K562 (cell line): ENCODE measurements at regions of chr6 and their contacts with region 1.

Region 1: GRCh38 chr6:42217519-42218367 is at the start of gene MRPS10:
- DNase-seq: peak; percentile 96 to 99 (median 96)
- ATAC-seq: peak; percentile 98
- H3K4me3 ChIP-seq: peak within 1 kb of the TSS; percentile 77
- H3K27ac ChIP-seq: peak within 1 kb of the TSS; percentile 92
- H3K4me1 ChIP-seq: peaks cover 6 to 14% of the 10 kb centered on the region in 2 experiments; a peak in 4 of 5 replicates
- H3K27me3 ChIP-seq: no peaks in the 10 kb centered on the region
- CTCF ChIP-seq: no peak
- EP300 ChIP-seq: 0 out of 2 replicates have a peak, but pooled peaks have one; percentile 48
- POLR2A ChIP-seq: peak; percentile 97
- RAD21 ChIP-seq: no peak
- polyA plus RNA-seq, gene MRPS10: 126 to 166 TPM

Region 2: DNA sequence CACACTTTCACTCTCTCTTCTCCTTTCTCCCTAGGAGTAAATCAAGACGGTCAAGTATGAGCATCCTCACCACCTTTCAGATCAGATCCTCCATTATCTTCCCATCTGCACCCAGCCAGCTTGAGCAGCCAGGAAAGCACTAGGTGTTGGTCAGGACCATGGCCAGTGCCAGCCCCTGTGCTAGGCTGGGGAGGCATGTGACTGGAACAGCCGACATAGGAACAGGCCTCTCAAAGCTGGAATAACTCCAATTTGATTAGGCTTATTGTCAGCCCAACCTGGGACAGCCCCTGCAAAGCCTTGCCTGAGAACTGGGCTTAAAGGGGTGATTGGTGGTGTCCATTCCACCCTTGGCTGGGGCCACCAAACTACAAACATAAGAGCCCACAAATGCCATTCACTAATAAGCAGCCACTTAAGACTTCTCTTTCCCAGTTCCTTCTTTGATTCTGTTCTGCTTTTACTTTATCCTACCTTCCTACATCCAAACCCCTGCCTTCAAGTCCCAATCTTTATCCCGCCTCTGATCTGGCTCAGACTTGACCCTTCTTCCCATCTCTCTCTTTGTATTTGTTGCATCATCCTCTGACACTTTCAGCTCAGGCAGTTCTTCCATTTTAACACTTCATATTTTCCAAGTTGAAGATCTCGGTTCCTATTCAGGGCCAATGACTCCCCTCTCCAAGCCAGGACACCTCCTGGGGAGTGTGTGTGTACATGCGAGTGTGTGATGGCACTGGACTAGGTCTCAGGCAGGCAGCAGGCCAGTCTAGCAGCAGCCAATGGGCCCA is 1050.4 kb before region 1 on chr6:
- CTCF ChIA-PET with region 1: no interaction called
- POLR2A ChIA-PET with region 1: no interaction called
- in situ Hi-C with region 1: no loop called
- intact Hi-C with region 1: no loop called
- DNase-seq: peak in 1 of 4 experiments; percentile 17
- ATAC-seq: peak; percentile 67; the same call in 2 of the 3 replicates
- H3K4me3 ChIP-seq: no peak overlapping the region
- H3K27ac ChIP-seq: no peak overlapping the region
- H3K4me1 ChIP-seq: no peaks in the 10 kb centered on the region
- H3K27me3 ChIP-seq: peaks cover 7 to 37% of the 10 kb centered on the region in 2 experiments
- CTCF ChIP-seq: no peak
- EP300 ChIP-seq: no peak
- POLR2A ChIP-seq: no peak
- RAD21 ChIP-seq: no peak

Region 3: GRCh38 chr6:41936073-41936837 is 281.5 kb before region 1 on chr6:
- CTCF ChIA-PET with region 1: no interaction called
- POLR2A ChIA-PET with region 1: interaction called, 3 read pairs
- in situ Hi-C with region 1: no loop called
- intact Hi-C with region 1: loop called (anchors 5 kb)
- DNase-seq: peak; percentile 65 to 95 (median 78)
- ATAC-seq: peak; percentile 65
- H3K4me3 ChIP-seq: no peak overlapping the region
- H3K27ac ChIP-seq: peak overlapping the region; percentile 50
- H3K4me1 ChIP-seq: peaks cover 54 to 58% of the 10 kb centered on the region in 2 experiments
- H3K27me3 ChIP-seq: no peaks in the 10 kb centered on the region
- CTCF ChIP-seq: peak; percentile 91 to 98 (median 95)
- EP300 ChIP-seq: peak; percentile 85
- POLR2A ChIP-seq: no peak; the same call in 1 of the 2 replicates
- RAD21 ChIP-seq: peak; percentile 87 to 90

Region 4: GRCh38 chr6:42086046-42087035 is 131.4 kb before region 1 on chr6:
- CTCF ChIA-PET with region 1: interaction called, 11 read pairs
- POLR2A ChIA-PET with region 1: interaction called, 8 read pairs
- in situ Hi-C with region 1: no loop called
- intact Hi-C with region 1: no loop called
- DNase-seq: peak; percentile 63 to 71 (median 66)
- ATAC-seq: peak; percentile 67
- H3K4me3 ChIP-seq: no peak overlapping the region
- H3K27ac ChIP-seq: no peak overlapping the region
- H3K4me1 ChIP-seq: peaks cover 27 to 32% of the 10 kb centered on the region in 2 experiments
- H3K27me3 ChIP-seq: no peaks in the 10 kb centered on the region
- CTCF ChIP-seq: peak; percentile 39 to 58 (median 42); a peak in 5 of 6 replicates
- EP300 ChIP-seq: no peak
- POLR2A ChIP-seq: no peak
- RAD21 ChIP-seq: peak in 1 of 2 experiments; percentile 23; a peak in 1 of 4 replicates

Region 5: GRCh38 chr6:42136508-42137193 is 81.1 kb before region 1 on chr6:
- CTCF ChIA-PET with region 1: no interaction called
- POLR2A ChIA-PET with region 1: no interaction called
- in situ Hi-C with region 1: no loop called
- intact Hi-C with region 1: loop called (anchors 2 kb)
- DNase-seq: peak; percentile 88 to 91 (median 88)
- ATAC-seq: peak; percentile 83
- H3K4me3 ChIP-seq: 0 out of 2 replicates have a peak overlapping the region, but pooled peaks have one; percentile 1
- H3K27ac ChIP-seq: peak overlapping the region; percentile 70
- H3K4me1 ChIP-seq: peaks cover 34 to 46% of the 10 kb centered on the region in 2 experiments
- H3K27me3 ChIP-seq: no peaks in the 10 kb centered on the region
- CTCF ChIP-seq: peak; percentile 70 to 78 (median 74)
- EP300 ChIP-seq: peak; percentile 70
- POLR2A ChIP-seq: no peak
- RAD21 ChIP-seq: peak; percentile 17 to 65; a peak in 2 of 4 replicates

Region 6: DNA sequence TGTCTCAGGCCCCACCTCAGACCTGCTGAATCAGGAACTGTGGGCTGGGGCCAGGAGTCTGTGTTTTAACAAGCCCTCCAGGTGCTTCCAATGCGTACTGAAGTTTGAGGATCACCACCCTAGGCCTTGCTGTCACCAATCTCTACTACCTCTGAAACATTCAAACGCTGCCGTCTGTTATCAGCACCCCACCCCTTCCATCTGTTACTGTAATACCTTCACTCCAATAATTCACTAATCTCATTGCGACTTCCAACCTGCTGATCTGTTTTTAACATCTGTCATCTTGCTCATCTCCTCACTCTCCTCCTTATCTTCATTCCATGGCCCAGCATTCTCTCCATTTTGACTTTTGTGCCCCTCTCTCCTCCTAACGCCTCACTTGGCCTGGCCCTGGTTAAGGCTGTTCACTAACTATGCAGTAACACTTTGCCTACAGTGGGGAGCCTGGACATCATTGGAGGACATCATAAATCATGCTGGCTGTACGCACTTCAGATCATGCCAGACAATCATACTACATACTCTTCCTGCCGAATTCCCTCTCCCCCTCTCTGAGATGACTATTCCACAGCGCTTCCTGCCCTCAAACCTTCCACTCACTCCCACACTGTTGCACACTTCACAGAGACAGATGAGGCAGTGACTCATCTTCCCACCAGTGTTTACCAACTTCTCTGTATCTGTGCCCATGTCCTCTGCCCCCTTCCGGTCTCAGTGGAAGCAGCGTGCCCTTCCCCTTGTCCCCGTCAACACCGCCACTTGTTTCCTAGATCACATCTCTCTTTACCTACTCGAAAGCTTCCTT is 20.0 kb before region 1 on chr6:
- CTCF ChIA-PET with region 1: no interaction called
- POLR2A ChIA-PET with region 1: interaction called, 12 read pairs
- in situ Hi-C with region 1: no loop called
- intact Hi-C with region 1: loop called (anchors 2 kb)
- DNase-seq: peak; percentile 89 to 95 (median 90)
- ATAC-seq: peak; percentile 65
- H3K4me3 ChIP-seq: no peak overlapping the region
- H3K27ac ChIP-seq: peak overlapping the region; percentile 83
- H3K4me1 ChIP-seq: peaks cover 48 to 65% of the 10 kb centered on the region in 2 experiments
- H3K27me3 ChIP-seq: no peaks in the 10 kb centered on the region
- CTCF ChIP-seq: peak; percentile 10 to 16 (median 15); a peak in 1 of 6 replicates
- EP300 ChIP-seq: peak; percentile 97
- POLR2A ChIP-seq: peak; percentile 48
- RAD21 ChIP-seq: no peak

Region 7: GRCh38 chr6:42230345-42231321 is 12.9 kb after region 1 on chr6:
- CTCF ChIA-PET with region 1: no interaction called
- POLR2A ChIA-PET with region 1: interaction called, 13 read pairs
- in situ Hi-C with region 1: no loop called
- intact Hi-C with region 1: loop called (anchors 2 kb)
- DNase-seq: peak in 3 of 4 experiments; percentile 40 to 68 (median 58)
- ATAC-seq: peak; percentile 69
- H3K4me3 ChIP-seq: no peak overlapping the region
- H3K27ac ChIP-seq: no peak overlapping the region
- H3K4me1 ChIP-seq: peaks cover 14 to 21% of the 10 kb centered on the region in 2 experiments
- H3K27me3 ChIP-seq: no peaks in the 10 kb centered on the region
- CTCF ChIP-seq: peak; percentile 62 to 83 (median 80)
- EP300 ChIP-seq: no peak
- POLR2A ChIP-seq: no peak
- RAD21 ChIP-seq: peak; percentile 66 to 82